ENCODE measurements at regions of chr19 and their contacts with region 1.

Region 1: DNA sequence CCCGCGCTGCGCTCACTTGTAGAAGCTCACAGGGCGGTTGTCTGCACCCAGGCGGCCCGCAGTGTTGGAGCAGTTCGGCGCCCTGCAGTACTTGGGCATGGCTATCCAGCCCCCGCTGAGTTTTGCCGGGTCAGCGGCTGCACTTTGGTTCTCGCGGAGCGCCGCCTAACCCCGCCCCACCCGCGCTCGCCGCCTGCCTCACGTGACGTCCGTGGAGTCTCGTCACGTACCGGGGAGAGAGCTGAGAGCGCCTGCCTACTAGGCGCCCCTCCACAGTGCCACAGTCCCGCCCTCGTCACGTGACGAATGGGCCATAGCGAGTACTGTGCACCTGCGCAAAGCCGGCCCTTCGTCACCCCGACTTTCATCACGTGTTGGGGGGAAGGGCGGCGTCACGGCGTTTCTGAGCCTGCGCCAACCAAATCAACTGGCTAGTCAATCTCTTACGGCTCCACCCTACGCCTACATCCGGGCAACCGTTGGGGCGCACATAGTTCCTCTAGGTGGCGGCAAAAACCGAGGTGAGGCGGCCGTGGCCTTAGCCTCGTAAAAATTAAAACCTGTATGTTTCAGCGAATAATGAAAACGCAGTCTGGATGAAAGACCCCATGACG is at the start of gene THAP8:
- DNase-seq: peak; percentile 98
- H3K4me3 ChIP-seq: peak within 1 kb of the TSS; percentile 64 to 68
- H3K27ac ChIP-seq: peak within 1 kb of the TSS; percentile 95 to 98
- H3K4me1 ChIP-seq: peaks cover 3 to 5% of the 10 kb centered on the region in 2 experiments; a peak in 2 of 4 replicates
- H3K27me3 ChIP-seq: no peaks in the 10 kb centered on the region
- CTCF ChIP-seq: peak; percentile 64
- EP300 ChIP-seq: no peak
- RAD21 ChIP-seq: 0 out of 2 replicates have a peak, but pooled peaks have one; percentile 5
- polyA plus RNA-seq, gene THAP8: 6.2 and 6.3 TPM in 2 replicates

Region 2: DNA sequence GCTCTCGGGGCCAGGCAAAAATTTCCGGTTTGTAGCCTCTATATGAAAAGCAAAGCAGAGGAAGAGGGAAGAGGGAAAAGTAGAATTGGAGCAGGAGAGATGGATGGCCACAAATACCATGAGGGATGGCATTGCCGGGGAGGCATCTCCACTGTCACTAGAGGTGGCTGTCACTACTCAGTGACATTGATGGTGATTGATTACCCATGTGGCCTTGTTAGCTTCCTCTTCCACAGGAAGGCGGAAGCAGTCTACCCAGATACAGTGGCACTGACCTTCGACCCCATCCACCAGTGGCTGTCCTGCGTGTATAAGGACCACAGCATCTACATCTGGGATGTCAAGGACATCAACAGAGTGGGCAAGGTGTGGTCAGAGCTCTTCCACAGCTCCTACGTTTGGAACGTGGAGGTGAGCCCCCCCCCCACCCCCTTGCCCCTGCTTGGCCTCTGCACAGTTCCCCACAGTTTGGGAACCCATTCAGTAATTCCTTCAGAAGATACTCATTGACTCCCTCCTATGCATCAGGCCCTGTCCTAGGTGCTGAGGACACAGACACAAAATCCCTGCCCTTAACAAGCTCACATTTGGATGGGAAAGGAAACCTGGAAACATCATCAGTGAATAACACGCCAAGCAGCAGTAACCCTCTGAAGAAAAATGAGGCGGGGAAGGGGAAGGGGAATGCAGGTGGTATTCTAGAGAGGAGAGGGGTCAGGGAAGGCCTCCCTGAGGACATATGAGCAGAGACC is 19.1 kb after region 1 on chr19:
- CTCF ChIA-PET with region 1: interaction called, 16 read pairs
- POLR2A ChIA-PET with region 1: no interaction called
- DNase-seq: no peak
- H3K4me3 ChIP-seq: no peak overlapping the region
- H3K27ac ChIP-seq: no peak overlapping the region
- H3K4me1 ChIP-seq: peaks cover 0 to 12% of the 10 kb centered on the region in 2 experiments; a peak in 1 of 4 replicates
- H3K27me3 ChIP-seq: no peaks in the 10 kb centered on the region
- CTCF ChIP-seq: no peak
- EP300 ChIP-seq: no peak
- RAD21 ChIP-seq: no peak

Region 3: GRCh38 chr19:36151144-36152018 is 97.2 kb after region 1 on chr19:
- CTCF ChIA-PET with region 1: no interaction called
- POLR2A ChIA-PET with region 1: no interaction called
- DNase-seq: no peak
- H3K4me3 ChIP-seq: no peak overlapping the region
- H3K27ac ChIP-seq: no peak overlapping the region
- H3K4me1 ChIP-seq: no peaks in the 10 kb centered on the region
- H3K27me3 ChIP-seq: no peaks in the 10 kb centered on the region
- CTCF ChIP-seq: no peak
- EP300 ChIP-seq: no peak
- RAD21 ChIP-seq: no peak